CD4-positive, alpha-beta T cell (primary cell): ENCODE measurements at regions of chr3 and their contacts with region 1.

Region 1: DNA sequence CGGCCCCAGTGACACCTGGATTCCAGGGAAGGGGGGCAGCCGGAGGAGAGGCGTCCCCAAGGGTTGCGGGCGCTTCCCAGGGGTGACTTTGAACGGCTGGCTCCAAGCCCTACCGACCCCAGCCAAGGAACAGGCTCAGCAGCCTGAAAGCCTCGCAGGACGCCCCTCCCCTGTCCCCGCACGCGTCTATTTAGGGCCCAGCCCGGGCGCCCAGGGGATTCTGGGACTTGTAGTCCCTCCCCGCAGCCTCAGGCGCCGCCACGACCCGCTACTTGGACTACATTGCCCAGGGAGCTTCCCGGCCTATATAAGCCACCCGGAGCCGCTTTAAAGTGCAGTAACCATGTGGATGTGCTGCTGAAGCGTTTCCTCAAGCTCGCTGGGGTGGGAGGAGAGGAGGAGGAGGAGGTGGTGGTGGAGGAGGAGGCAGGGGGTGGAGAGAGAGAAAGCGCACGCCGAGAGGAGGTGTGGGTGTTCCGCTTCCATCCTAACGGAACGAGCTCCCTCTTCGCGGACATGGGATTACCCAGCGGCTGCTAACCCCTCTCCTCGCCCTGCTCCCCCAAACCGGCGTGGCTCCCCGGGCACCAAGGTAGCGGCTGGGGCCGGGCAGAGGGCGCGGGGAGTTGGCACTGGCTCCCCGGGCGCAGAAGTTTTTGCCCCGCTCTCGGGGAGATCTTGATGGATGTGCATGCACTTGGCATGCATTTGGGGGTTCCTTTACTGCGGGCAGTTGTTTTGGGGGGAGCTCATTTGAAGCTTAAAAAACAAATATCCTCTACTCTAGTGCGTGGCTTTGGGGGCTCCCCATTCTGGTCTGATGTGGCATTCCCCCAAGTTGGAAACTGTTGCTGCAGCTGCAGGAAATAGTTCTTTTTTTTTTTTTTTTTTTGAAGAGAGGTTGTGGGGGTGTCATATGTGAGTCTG is at the start of gene ITPR1:
- DNase-seq: peak; percentile 97 to 99 (median 98)
- ATAC-seq: peak; percentile 87
- H3K4me3 ChIP-seq: peak within 1 kb of the TSS; percentile 92
- H3K4me3 Mint-ChIP-seq: peak within 1 kb of the TSS; percentile 98
- H3K27ac ChIP-seq: peak within 1 kb of the TSS; percentile 35 to 84
- H3K27ac Mint-ChIP-seq: peak within 1 kb of the TSS; percentile 88
- H3K4me1 ChIP-seq: peaks cover 31% of the 10 kb centered on the region
- H3K4me1 Mint-ChIP-seq: peaks cover 53% of the 10 kb centered on the region
- H3K27me3 ChIP-seq: no peaks in the 10 kb centered on the region
- H3K27me3 Mint-ChIP-seq: no peaks in the 10 kb centered on the region
- CTCF ChIP-seq: no peak
- total RNA-seq, gene ITPR1: 57.6 to 59.9 TPM

Region 2: DNA sequence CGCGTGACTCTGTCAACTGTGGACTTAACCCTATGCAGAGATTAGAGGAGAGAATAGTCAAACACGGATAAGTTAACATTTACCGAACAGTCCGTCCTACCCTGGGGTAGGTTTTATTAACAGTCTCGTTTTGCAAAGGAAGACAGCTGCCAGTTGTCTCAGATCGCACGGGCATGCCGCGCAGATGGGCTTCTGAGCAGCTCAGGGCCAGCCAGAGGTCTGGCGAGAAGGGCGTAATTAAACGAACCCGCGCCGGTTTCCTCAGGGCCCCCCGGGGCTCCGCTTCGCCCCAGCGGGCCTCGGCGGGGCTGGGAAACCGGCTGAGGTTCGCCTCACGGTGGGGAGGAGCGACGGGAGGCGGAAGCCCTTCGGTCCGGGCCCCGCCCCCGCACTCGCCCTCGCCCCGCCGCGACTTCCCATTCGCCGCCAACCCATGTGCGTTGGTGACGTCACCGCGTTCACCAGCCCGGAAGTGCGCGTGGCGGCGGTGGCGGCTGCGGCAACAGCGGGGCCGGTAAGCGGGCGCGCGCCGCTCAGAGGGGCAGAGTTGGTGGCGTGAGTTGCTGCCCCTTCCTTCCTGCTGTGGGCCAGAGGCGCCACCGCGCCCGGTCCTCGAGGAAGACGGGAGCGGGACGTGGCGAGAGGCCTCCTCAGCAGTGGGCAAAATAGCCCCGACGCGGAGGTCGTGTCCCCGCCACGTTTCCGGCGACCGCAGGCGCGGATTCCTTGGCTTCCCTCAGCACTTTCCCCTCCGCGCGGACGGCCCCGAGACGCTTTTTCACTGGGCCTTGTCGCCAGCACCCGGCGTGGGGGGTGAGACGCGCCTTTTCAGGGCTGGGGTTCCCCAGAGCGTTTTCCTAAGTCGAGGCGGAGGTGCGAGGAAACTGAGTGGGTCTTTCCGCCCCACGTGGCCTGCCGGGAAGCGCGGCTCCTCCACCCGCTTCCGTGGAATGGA is 1366.5 kb before region 1 on chr3 and contains the start of gene TRNT1:
- CTCF ChIA-PET with region 1: no interaction called
- POLR2A ChIA-PET with region 1: no interaction called
- intact Hi-C with region 1: loop called in 1 of 2 experiments (anchors 10 kb)
- DNase-seq: peak; percentile 93 to 99 (median 96)
- ATAC-seq: peak; percentile 94
- H3K4me3 ChIP-seq: peak within 1 kb of the TSS; percentile 94
- H3K4me3 Mint-ChIP-seq: peak within 1 kb of the TSS; percentile 91
- H3K27ac ChIP-seq: peak within 1 kb of the TSS; percentile 92 to 98
- H3K27ac Mint-ChIP-seq: peak within 1 kb of the TSS; percentile 96
- H3K4me1 ChIP-seq: peaks cover 35% of the 10 kb centered on the region
- H3K4me1 Mint-ChIP-seq: peaks cover 47% of the 10 kb centered on the region
- H3K27me3 ChIP-seq: no peaks in the 10 kb centered on the region
- H3K27me3 Mint-ChIP-seq: no peaks in the 10 kb centered on the region
- CTCF ChIP-seq: no peak
- total RNA-seq, gene TRNT1: 25.8 to 30.7 TPM

Region 3: DNA sequence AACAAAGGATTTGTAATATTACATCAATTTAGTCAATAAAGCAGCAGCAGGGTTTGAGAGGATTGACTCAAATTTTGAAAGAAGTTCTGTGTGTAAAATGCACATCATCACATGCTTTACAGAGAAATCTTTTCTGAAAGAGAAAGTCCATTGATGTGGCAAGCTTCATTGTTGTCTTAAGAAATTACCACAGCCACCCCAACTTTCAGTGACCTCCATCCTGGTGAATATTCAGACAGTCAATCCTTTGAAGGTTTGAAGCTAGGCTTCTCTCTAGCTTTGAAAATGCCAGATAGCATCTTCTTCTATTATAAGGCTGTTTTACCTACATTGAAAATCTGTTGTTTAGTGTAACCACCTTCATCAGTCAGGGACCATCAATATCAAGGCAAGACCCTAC is 241.9 kb before region 1 on chr3:
- CTCF ChIA-PET with region 1: no interaction called
- POLR2A ChIA-PET with region 1: no interaction called
- intact Hi-C with region 1: no loop called
- DNase-seq: no peak
- ATAC-seq: no peak
- H3K4me3 ChIP-seq: no peak overlapping the region
- H3K4me3 Mint-ChIP-seq: no peak overlapping the region
- H3K27ac ChIP-seq: no peak overlapping the region
- H3K27ac Mint-ChIP-seq: no peak overlapping the region
- H3K4me1 ChIP-seq: no peaks in the 10 kb centered on the region
- H3K4me1 Mint-ChIP-seq: no peaks in the 10 kb centered on the region
- H3K27me3 ChIP-seq: no peaks in the 10 kb centered on the region
- H3K27me3 Mint-ChIP-seq: no peaks in the 10 kb centered on the region
- CTCF ChIP-seq: no peak

Region 4: DNA sequence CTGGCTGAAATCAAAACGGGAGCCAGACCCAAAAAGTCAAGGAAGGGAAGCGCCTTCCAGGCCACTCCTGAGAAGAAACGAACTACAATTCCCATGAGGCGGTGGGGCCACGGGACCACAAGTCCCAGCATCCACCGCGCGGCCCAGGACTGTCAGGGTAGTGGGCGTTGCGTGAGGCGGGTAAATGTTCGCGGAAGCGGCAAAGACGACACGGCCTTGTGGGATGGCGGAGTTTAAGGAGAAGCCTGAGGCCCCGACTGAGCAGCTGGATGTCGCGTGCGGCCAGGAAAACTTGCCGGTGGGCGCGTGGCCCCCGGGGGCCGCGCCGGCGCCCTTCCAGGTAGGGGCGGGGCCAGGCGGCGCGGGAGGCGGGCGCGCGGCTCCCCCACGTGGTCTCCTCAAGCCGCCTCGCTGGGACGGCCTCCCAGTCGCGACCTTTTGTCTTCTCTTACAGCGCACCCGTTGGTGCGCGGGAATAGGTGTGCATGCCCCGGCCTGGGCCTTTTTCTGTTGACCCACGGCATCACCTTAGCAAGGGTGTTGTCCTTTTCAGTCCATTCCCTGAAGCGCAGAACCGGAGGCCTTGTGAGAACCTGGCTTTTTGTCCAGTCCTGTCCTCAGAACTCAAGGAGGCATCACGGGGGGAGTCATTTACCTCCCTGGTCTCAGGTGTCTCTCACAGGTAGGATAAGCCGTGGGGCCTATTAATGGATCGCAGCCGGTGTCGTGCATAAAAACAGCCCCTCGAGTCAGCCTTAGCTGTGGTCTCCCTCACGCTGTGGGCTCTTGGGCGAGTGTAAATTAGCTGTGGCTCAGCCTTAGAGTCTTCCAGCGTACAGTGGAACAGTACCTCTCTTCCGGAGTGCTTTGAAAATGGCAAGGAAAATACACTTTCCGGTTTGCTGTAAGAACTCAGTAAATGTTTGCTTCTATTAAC is 189.8 kb before region 1 on chr3 and contains the start of gene SETMAR:
- CTCF ChIA-PET with region 1: no interaction called
- POLR2A ChIA-PET with region 1: interaction called, 7 read pairs
- intact Hi-C with region 1: loop called in 1 of 2 experiments (anchors 2 kb)
- DNase-seq: peak; percentile 69 to 90 (median 78)
- ATAC-seq: peak; percentile 92
- H3K4me3 ChIP-seq: peak within 1 kb of the TSS; percentile 83
- H3K4me3 Mint-ChIP-seq: peak within 1 kb of the TSS; percentile 95
- H3K27ac ChIP-seq: peak within 1 kb of the TSS; percentile 80 to 89
- H3K27ac Mint-ChIP-seq: peak within 1 kb of the TSS; percentile 94
- H3K4me1 ChIP-seq: peaks cover 20% of the 10 kb centered on the region
- H3K4me1 Mint-ChIP-seq: peaks cover 41% of the 10 kb centered on the region
- H3K27me3 ChIP-seq: no peaks in the 10 kb centered on the region
- H3K27me3 Mint-ChIP-seq: no peaks in the 10 kb centered on the region
- CTCF ChIP-seq: no peak
- total RNA-seq, gene SETMAR: 9.1 to 9.2 TPM

Region 5: GRCh38 chr3:4466741-4467521 is 26.3 kb before region 1 on chr3 and contains the start of gene SUMF1:
- CTCF ChIA-PET with region 1: interaction called, 3 read pairs
- POLR2A ChIA-PET with region 1: interaction called, 103 read pairs
- intact Hi-C with region 1: loop called (anchors 1 to 2 kb)
- DNase-seq: peak; percentile 51 to 85 (median 64)
- ATAC-seq: peak; percentile 93
- H3K4me3 ChIP-seq: peak within 1 kb of the TSS; percentile 77
- H3K4me3 Mint-ChIP-seq: peak within 1 kb of the TSS; percentile 91
- H3K27ac ChIP-seq: peak within 1 kb of the TSS; percentile 53 to 69
- H3K27ac Mint-ChIP-seq: peak within 1 kb of the TSS; percentile 83
- H3K4me1 ChIP-seq: peaks cover 15% of the 10 kb centered on the region
- H3K4me1 Mint-ChIP-seq: peaks cover 29% of the 10 kb centered on the region
- H3K27me3 ChIP-seq: no peaks in the 10 kb centered on the region
- H3K27me3 Mint-ChIP-seq: no peaks in the 10 kb centered on the region
- CTCF ChIP-seq: no peak
- total RNA-seq, gene SUMF1: 7.0 to 8.1 TPM

Region 6: DNA sequence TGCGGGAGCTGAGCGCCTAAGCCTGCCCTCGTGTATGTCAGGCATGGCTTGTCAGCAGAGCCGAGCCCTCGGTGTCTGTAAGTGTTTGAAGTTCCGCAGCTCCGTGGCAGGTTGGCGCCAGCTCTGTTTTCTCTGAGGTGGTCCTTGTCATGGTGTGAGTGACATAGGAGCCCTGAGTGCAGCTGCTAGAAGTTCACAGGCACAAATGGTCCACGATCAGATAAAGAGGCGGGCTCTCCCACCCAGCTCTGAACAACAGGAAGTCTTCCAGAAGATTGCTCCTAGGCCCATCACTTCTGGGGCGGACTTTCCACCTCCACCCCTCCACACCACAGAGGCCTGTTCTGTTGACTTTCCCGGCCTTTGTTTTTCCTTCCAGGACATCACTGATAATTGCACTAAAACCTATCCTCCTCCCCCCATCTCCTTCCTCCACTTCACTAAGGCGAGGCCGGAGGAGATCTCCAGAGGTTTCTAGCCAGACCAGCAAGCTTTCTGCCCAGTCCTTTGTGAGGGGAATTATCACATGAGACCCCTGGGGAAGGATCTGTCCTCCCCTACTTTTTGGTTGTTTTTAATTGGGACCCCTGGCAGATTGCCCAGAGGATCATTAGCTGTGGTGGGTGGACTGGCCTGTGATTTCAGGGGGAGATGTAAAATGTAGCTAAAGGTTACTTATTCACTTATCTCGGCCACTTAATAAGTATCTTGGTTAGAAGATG is 19.8 kb after region 1 on chr3:
- CTCF ChIA-PET with region 1: interaction called, 4 read pairs
- POLR2A ChIA-PET with region 1: interaction called, 127 read pairs
- intact Hi-C with region 1: loop called in 1 of 2 experiments (anchors 2 kb)
- DNase-seq: no peak
- ATAC-seq: no peak
- H3K4me3 ChIP-seq: no peak overlapping the region
- H3K4me3 Mint-ChIP-seq: no peak overlapping the region
- H3K27ac ChIP-seq: no peak overlapping the region
- H3K27ac Mint-ChIP-seq: no peak overlapping the region
- H3K4me1 ChIP-seq: peaks cover 14% of the 10 kb centered on the region
- H3K4me1 Mint-ChIP-seq: peaks cover 59% of the 10 kb centered on the region
- H3K27me3 ChIP-seq: no peaks in the 10 kb centered on the region
- H3K27me3 Mint-ChIP-seq: no peaks in the 10 kb centered on the region
- CTCF ChIP-seq: no peak

Region 7: GRCh38 chr3:4584456-4585249 is 91.4 kb after region 1 on chr3:
- CTCF ChIA-PET with region 1: no interaction called
- POLR2A ChIA-PET with region 1: interaction called, 12 read pairs
- intact Hi-C with region 1: loop called in 1 of 2 experiments (anchors 10 kb)
- DNase-seq: peak in 4 of 14 experiments; percentile 35 to 58 (median 45)
- ATAC-seq: peak; percentile 48
- H3K4me3 ChIP-seq: peak overlapping the region; percentile 41
- H3K4me3 Mint-ChIP-seq: peak overlapping the region; percentile 88
- H3K27ac ChIP-seq: peak overlapping the region in 1 of 2 donors; percentile 42
- H3K27ac Mint-ChIP-seq: peak overlapping the region; percentile 79
- H3K4me1 ChIP-seq: peaks cover 35% of the 10 kb centered on the region
- H3K4me1 Mint-ChIP-seq: peaks cover 80% of the 10 kb centered on the region
- H3K27me3 ChIP-seq: no peaks in the 10 kb centered on the region
- H3K27me3 Mint-ChIP-seq: no peaks in the 10 kb centered on the region
- CTCF ChIP-seq: no peak

Region 8: DNA sequence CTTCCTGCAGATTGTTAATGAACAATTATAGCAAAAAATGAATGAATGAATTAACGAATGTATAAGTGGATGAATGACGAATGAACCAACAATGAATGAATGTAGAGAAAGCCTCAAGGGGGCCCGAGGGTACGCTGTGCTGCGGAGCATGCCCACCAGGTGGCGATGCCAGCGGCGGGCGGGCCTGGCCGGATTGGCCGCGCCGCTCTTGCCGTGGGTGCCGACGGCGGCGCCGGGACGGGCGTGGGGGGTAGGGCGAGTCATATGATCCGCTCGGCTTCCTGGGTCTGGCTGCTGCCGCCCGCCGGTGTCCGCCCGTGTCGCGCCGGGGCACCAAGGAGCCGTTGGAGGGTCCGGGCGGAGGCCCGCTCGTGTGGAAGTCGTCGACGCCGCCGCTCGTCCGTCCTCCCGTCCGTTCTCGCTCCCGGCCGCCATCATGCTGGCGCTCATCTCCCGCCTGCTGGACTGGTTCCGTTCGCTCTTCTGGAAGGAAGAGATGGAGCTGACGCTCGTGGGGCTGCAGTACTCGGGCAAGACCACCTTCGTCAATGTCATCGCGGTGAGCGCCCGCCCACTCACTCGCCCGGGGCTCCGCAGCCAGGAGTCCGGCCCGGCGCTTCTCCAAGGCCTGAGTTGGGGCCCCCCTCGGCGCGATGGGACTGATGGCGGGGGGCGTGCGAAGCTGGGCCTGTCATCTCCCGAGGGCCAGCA is 628.9 kb after region 1 on chr3 and contains the start of gene ARL8B:
- CTCF ChIA-PET with region 1: no interaction called
- POLR2A ChIA-PET with region 1: interaction called, 5 read pairs
- intact Hi-C with region 1: loop called in 1 of 2 experiments (anchors 5 kb)
- DNase-seq: peak; percentile 83 to 94 (median 90)
- ATAC-seq: peak; percentile 99
- H3K4me3 ChIP-seq: peak within 1 kb of the TSS; percentile 94
- H3K4me3 Mint-ChIP-seq: peak within 1 kb of the TSS; percentile 87
- H3K27ac ChIP-seq: peak within 1 kb of the TSS; percentile 79 to 86
- H3K27ac Mint-ChIP-seq: peak within 1 kb of the TSS; percentile 87
- H3K4me1 ChIP-seq: peaks cover 36% of the 10 kb centered on the region
- H3K4me1 Mint-ChIP-seq: peaks cover 50% of the 10 kb centered on the region
- H3K27me3 ChIP-seq: no peaks in the 10 kb centered on the region
- H3K27me3 Mint-ChIP-seq: no peaks in the 10 kb centered on the region
- CTCF ChIP-seq: peak; percentile 97
- total RNA-seq, gene ARL8B: 48.5 to 49.7 TPM